ENCODE measurements at regions of chr22 and their contacts with region 1.

Region 1: DNA sequence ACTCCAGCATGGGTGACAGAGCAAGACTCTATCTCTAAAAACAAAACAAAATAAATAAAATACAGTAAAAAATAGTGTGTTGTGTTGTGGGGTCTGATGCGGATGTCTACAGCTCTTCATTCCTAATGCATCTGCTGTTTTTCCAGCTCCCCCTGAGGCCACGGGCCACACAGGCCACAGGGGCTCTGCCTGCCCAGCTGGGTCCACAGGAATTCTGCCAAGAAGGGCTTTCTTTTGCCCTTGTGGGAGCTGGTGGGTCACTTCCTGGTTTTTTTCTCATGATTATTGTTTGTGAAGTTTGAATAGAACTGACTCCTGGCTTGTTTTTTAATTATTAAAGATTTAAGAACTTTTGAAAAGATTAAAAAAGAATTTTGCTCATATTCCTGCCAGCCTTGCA is 67.4 kb upstream of the CLDN5 start:
- DNase-seq: no peak
- ATAC-seq: no peak
- H3K4me3 ChIP-seq: no peak overlapping the region
- H3K27ac ChIP-seq: no peak overlapping the region
- H3K4me1 ChIP-seq: no peaks in the 10 kb centered on the region
- H3K27me3 ChIP-seq: no peaks in the 10 kb centered on the region

Region 2: GRCh38 chr22:19546680-19547079 is 44.9 kb before region 1 on chr22:
- intact Hi-C with region 1: loop called in 1 of 2 experiments (anchors 5 kb)
- DNase-seq: no peak
- ATAC-seq: no peak
- H3K4me3 ChIP-seq: no peak overlapping the region
- H3K27ac ChIP-seq: no peak overlapping the region
- H3K4me1 ChIP-seq: no peaks in the 10 kb centered on the region
- H3K27me3 ChIP-seq: no peaks in the 10 kb centered on the region

Region 3: GRCh38 chr22:19644314-19645223 is 53.0 kb after region 1 on chr22:
- intact Hi-C with region 1: no loop called
- DNase-seq: peak in 1 of 2 donors; percentile 76
- ATAC-seq: no peak
- H3K4me3 ChIP-seq: no peak overlapping the region
- H3K27ac ChIP-seq: no peak overlapping the region
- H3K4me1 ChIP-seq: no peaks in the 10 kb centered on the region
- H3K27me3 ChIP-seq: no peaks in the 10 kb centered on the region